Naive thymus-derived CD8-positive, alpha-beta T cell (primary cell): ENCODE measurements at regions of chr16 and their contacts with region 1.

Region 1: GRCh38 chr16:57265850-57266530 is 18.5 kb downstream of the PLLP start:
- DNase-seq: no peak
- ATAC-seq: no peak
- H3K4me3 Mint-ChIP-seq: peak overlapping the region; percentile 46 to 84 (median 69)
- H3K27ac Mint-ChIP-seq: peak overlapping the region; percentile 90 to 99 (median 97)
- H3K4me1 Mint-ChIP-seq: peaks cover 25 to 58% (median 46%) of the 10 kb centered on the region in 4 donors
- H3K27me3 Mint-ChIP-seq: no peaks in the 10 kb centered on the region

Region 2: DNA sequence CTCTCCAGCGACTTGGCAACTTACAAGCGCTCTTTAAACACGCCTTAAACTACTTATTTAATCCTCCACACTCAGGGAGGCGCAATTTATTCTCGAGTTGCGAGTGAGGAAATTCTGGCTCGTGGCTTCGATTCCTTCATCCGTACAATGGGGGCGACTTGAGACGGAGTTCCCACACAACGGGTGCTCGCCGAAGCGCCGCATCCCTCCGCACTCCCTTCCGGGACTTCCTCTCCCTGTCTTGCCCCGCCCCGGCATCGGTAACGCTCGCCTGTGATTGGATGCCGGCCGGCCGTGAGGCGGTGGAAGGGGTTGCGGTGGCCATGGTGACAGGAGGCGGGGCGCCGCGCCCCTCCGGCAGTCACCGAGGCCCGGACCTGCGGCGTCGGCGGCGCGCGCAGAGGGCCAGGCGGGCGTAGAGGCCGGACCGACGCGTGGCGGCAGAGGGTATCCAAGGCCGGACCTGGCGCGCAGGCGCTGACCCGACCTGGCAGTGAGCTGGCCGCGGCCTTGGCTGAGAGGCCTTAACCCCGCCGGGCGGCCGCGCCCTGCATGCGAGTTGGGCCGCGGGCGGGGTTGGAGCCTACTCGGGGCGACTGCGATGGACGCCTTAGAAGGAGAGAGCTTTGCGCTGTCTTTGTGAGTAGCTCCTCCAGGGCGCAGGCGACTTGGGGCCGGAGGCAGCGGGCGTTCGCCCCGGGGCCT is 21.1 kb before region 1 on chr16 and contains the start of gene ARL2BP:
- POLR2A ChIA-PET with region 1: interaction called, 24 read pairs
- DNase-seq: peak; percentile 95 to 98 (median 97)
- ATAC-seq: peak; percentile 92 to 96
- H3K4me3 Mint-ChIP-seq: peak within 1 kb of the TSS; percentile 87 to 96 (median 94)
- H3K27ac Mint-ChIP-seq: peak within 1 kb of the TSS; percentile 93 to 97 (median 96)
- H3K4me1 Mint-ChIP-seq: peaks cover 11 to 33% (median 21%) of the 10 kb centered on the region in 4 donors
- H3K27me3 Mint-ChIP-seq: no peaks in the 10 kb centered on the region
- polyA plus RNA-seq, gene ARL2BP: 148 to 154 (median 153) TPM

Region 3: DNA sequence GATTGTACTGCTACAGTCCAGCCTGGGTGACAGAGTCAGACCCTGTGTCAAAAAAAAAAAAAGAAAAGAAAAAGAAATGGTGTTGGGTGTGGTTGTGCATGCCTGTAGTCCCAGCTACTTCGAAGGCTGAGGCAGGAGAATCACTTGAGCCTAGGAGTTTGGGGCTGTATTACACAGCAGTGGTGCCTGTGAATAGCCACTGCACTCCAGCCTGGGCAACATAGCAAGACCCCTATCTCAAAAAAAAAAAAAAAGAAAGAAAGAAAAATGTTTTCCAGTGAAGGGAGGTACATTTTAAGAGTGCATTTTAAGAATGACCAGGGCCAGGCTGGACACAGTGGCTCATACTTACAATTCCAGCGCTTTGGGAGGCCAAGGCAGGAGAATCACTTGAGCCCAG is 14.6 kb before region 1 on chr16:
- POLR2A ChIA-PET with region 1: interaction called, 24 read pairs
- DNase-seq: no peak
- ATAC-seq: no peak
- H3K4me3 Mint-ChIP-seq: no peak overlapping the region
- H3K27ac Mint-ChIP-seq: peak overlapping the region in 1 of 10 donors; percentile 49
- H3K4me1 Mint-ChIP-seq: peaks cover 0 to 6% (median 3%) of the 10 kb centered on the region in 4 donors
- H3K27me3 Mint-ChIP-seq: no peaks in the 10 kb centered on the region

Region 4: GRCh38 chr16:57284208-57284951 is 18.4 kb after region 1 on chr16 and contains the start of gene PLLP:
- POLR2A ChIA-PET with region 1: interaction called, 55 read pairs
- DNase-seq: peak in 7 of 10 donors; percentile 32 to 55 (median 49)
- ATAC-seq: peak; percentile 80
- H3K4me3 Mint-ChIP-seq: peak within 1 kb of the TSS; percentile 78 to 92 (median 82)
- H3K27ac Mint-ChIP-seq: peak within 1 kb of the TSS in 8 of 10 donors; percentile 35 to 92 (median 71)
- H3K4me1 Mint-ChIP-seq: peaks cover 16 to 44% (median 34%) of the 10 kb centered on the region in 4 donors
- H3K27me3 Mint-ChIP-seq: peaks cover 0 to 12% (median 0%) of the 10 kb centered on the region in 5 donors
- polyA plus RNA-seq, gene PLLP: 4.9 to 8.8 (median 6.3) TPM

Region 5: GRCh38 chr16:57535680-57536305 is 269.8 kb after region 1 on chr16:
- POLR2A ChIA-PET with region 1: interaction called, 11 read pairs
- DNase-seq: peak; percentile 85 to 95 (median 90)
- ATAC-seq: peak; percentile 82 to 85
- H3K4me3 Mint-ChIP-seq: peak overlapping the region; percentile 73 to 90 (median 82)
- H3K27ac Mint-ChIP-seq: peak overlapping the region; percentile 90 to 99 (median 94)
- H3K4me1 Mint-ChIP-seq: peaks cover 49 to 86% (median 77%) of the 10 kb centered on the region in 4 donors
- H3K27me3 Mint-ChIP-seq: no peaks in the 10 kb centered on the region